Cardiac septum (tissue), 1 donor: ENCODE measurements at regions of chr6 and their contacts with region 1.

Region 1: GRCh38 chr6:117138920-117139319 is 126.4 kb upstream of the VGLL2 start:
- DNase-seq: no peak

Region 2: DNA sequence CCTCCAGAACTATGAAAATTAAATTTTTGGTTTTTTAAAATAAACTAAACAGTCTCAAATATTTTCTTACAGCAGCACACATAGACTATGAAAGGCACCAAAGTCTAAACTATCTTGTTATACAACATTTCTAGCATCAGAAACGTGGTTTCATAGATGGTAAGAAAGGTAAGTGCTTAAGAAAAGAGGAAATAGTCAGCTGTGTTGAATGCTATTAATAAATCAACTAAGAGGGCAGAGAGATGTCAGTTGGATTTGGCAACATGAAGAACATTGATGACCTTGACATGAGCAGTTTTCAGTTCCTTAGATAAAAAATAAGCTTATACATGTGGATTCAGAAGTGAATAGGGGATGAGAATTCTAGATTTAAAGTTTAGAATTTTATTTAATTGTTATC is 148.2 kb before region 1 on chr6:
- intact Hi-C with region 1: no loop called
- DNase-seq: no peak

Region 3: DNA sequence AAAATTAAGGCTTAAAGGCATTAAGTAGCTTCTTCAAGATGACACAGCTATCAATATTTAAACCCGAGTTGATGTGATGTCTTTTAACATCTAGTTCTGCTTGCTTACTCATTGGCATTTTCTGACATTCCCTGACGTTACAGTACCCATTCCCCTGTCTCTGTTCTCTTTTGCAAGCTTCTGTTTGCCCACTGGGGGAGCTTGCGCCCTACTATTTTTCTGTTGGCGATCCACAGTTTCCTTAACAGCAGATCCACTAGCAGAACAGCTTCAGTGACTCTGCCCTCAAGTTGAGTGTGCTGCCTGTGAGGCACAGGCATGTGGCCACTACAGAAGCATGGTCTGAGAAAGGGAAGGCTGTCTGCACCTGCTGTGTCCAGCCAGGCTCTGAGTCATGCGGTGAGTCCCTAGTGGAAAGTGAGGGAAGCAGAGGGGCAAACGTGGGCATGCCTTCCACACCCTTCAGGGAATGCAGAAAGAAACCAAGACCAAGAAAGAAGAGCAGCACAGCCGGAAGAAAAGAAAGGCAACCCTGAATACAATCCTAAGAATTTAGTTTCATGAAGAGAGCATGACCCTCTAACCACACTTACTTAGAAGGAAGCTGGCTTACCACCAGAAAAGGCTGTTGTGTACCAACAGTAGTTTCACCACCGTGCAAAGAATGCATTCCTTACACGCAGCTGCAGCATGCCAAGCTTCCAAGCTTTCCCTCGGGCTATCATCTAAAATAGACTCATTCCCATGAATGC is 28.8 kb after region 1 on chr6:
- intact Hi-C with region 1: loop called (anchors 2 kb)
- DNase-seq: no peak

Region 4: DNA sequence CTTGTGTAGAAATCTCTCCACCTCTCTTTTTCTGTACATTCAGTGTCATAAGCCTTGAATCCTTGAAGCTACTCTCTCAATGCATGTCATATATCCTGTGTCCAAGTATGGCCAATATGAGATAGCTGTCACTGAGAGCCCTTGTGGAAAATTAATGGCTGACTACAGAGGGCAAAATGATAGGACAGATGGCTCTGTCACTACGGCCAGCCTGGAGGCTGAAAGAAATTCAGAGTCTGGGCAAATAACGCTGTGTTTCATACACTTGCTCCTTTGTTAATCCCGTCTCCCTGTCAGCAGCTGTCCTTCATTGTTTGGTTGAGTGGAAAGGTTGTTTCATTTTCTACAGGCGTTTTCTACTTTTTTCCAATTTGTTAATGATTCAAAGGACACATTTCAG is 56.1 kb after region 1 on chr6:
- intact Hi-C with region 1: loop called (anchors 5 kb)
- DNase-seq: no peak

Region 5: DNA sequence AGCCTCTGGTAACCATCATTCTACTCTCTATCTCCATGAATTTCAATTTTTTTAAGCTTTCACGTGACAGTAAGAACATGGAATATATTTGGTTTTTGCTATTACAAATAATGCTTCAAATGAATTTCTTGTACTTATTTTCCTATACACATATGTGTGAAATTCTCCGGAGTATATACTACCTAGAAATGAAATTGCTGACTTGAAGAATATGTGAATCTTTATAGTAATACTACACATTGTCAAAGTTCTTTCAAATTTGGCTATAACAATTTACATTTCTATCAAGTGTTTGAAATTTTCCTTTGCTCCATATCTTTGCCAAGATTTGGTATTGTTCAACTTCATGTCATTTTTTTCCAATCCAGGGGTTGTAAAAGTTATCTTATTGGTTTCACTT is 114.9 kb after region 1 on chr6:
- intact Hi-C with region 1: no loop called
- DNase-seq: no peak

Region 6: GRCh38 chr6:117265410-117266256 is 126.7 kb after region 1 on chr6 and contains the start of gene VGLL2:
- intact Hi-C with region 1: loop called (anchors 5 kb)
- DNase-seq: no peak
- total RNA-seq, gene VGLL2: 38.1 TPM

Region 7: GRCh38 chr6:117290173-117290846 is 151.4 kb after region 1 on chr6:
- intact Hi-C with region 1: loop called (anchors 10 kb)
- DNase-seq: no peak